ENCODE measurements at regions of chrX and their contacts with region 1.

Region 1: DNA sequence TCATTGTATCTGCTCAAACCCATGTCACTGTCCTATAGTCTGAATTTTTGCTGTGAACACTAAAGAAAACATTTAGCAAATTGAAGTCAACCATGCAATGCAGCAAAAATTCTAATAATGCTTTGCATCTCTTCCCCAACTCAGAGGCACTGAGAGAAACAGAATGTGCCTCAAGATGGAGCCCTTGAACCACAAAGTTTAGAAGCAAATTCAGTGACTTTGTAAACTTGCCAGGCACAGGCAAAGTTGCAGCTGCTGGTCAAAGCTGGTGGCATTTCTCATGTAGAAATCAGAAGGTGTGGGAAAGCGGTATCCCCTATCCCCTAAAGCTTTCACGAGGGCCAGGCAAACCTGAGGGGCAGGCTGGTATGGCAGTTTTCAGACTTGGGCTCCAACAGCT is 121.7 kb upstream of the DIPK2B start:
- DNase-seq: peak in 4 of 14 experiments; percentile 3 to 20 (median 15)
- ATAC-seq: no peak
- H3K4me3 ChIP-seq: no peak overlapping the region
- H3K4me3 Mint-ChIP-seq: no peak overlapping the region
- H3K27ac ChIP-seq: no peak overlapping the region
- H3K27ac Mint-ChIP-seq: no peak overlapping the region
- H3K4me1 ChIP-seq: no peaks in the 10 kb centered on the region
- H3K4me1 Mint-ChIP-seq: no peaks in the 10 kb centered on the region
- H3K27me3 ChIP-seq: peaks cover 0 to 6% of the 10 kb centered on the region in 2 experiments
- H3K27me3 Mint-ChIP-seq: no peaks in the 10 kb centered on the region
- CTCF ChIP-seq: no peak

Region 2: DNA sequence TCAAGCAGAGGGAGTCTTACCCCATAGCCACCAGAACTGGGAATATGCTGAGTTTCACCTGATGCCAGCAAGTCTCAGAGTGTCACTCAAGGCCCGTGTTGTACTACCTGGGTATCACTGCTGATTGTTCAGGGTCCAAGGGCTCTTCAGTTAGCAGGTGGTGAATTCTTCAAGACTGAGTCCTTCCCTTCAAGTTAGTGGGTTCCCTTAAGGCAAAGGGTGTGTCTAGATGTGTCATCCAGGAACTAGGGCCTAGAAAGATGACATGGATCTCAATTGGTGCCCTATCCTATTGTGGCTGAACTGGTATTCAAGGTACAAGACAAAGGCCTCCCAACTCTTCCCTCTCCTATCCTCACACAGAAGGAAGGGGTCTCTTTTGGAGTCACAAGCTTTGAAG is 38.2 kb after region 1 on chrX:
- CTCF ChIA-PET with region 1: no interaction called
- POLR2A ChIA-PET with region 1: no interaction called
- intact Hi-C with region 1: no loop called
- DNase-seq: no peak
- ATAC-seq: no peak
- H3K4me3 ChIP-seq: no peak overlapping the region
- H3K4me3 Mint-ChIP-seq: no peak overlapping the region
- H3K27ac ChIP-seq: no peak overlapping the region
- H3K27ac Mint-ChIP-seq: no peak overlapping the region
- H3K4me1 ChIP-seq: no peaks in the 10 kb centered on the region
- H3K4me1 Mint-ChIP-seq: no peaks in the 10 kb centered on the region
- H3K27me3 ChIP-seq: peaks cover 0 to 3% of the 10 kb centered on the region in 2 experiments
- H3K27me3 Mint-ChIP-seq: no peaks in the 10 kb centered on the region
- CTCF ChIP-seq: no peak

Region 3: GRCh38 chrX:45445745-45446412 is 123.5 kb after region 1 on chrX:
- CTCF ChIA-PET with region 1: no interaction called
- POLR2A ChIA-PET with region 1: no interaction called
- intact Hi-C with region 1: no loop called
- DNase-seq: peak in 2 of 14 experiments; percentile 5 to 20
- ATAC-seq: no peak
- H3K4me3 ChIP-seq: no peak overlapping the region
- H3K4me3 Mint-ChIP-seq: no peak overlapping the region
- H3K27ac ChIP-seq: no peak overlapping the region
- H3K27ac Mint-ChIP-seq: no peak overlapping the region
- H3K4me1 ChIP-seq: no peaks in the 10 kb centered on the region
- H3K4me1 Mint-ChIP-seq: no peaks in the 10 kb centered on the region
- H3K27me3 ChIP-seq: no peaks in the 10 kb centered on the region
- H3K27me3 Mint-ChIP-seq: no peaks in the 10 kb centered on the region
- CTCF ChIP-seq: no peak

Region 4: DNA sequence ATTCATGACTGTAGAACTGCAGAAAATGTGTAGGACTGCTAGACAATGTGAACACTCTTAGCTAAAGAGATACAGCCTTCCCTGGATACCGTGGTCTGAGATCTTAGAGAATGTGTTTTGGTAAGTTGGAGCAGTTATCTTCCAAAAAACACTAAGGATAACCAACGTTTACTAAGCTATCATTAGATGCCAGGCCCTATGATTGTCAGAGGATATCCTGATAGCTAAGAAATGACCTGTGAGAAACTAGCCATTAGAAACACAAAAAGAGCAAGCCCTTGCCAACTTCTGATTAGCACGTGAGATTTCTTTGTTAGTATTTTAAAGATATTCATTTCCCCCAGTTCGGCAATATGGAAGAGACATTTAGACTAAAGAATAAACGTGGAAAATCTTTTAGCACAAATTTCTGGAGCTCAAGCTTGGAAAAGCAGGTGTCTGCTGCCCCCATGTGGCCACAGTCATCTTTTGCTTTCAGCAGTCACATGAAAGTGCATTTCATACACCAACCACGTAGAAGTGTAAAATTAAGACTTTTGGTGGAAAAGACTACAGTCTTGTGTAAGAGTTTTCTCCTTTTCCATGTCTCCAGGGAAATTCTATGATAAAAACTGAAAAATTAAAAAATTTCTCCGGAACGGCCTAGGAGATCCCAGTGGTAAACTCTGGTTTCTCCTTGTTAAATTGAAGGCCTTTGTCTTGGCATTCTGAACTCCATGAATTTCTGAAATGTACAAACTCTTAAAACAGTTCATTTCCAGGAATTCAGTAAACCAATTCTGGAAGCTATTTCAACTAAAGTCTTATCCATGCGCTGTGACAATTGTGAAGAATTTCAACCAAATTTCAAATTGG is 1086.4 kb after region 1 on chrX:
- CTCF ChIA-PET with region 1: no interaction called
- POLR2A ChIA-PET with region 1: no interaction called
- intact Hi-C with region 1: loop called (anchors 10 kb)
- DNase-seq: peak; percentile 44 to 79 (median 55)
- ATAC-seq: no peak
- H3K4me3 ChIP-seq: no peak overlapping the region
- H3K4me3 Mint-ChIP-seq: no peak overlapping the region
- H3K27ac ChIP-seq: no peak overlapping the region
- H3K27ac Mint-ChIP-seq: no peak overlapping the region
- H3K4me1 ChIP-seq: no peaks in the 10 kb centered on the region
- H3K4me1 Mint-ChIP-seq: peaks cover 5% of the 10 kb centered on the region
- H3K27me3 ChIP-seq: no peaks in the 10 kb centered on the region
- H3K27me3 Mint-ChIP-seq: no peaks in the 10 kb centered on the region
- CTCF ChIP-seq: peak; percentile 73

Measured in CD4-positive, alpha-beta T cell (primary cell).